Caco-2 (cell line): ENCODE measurements at regions of chr13 and their contacts with region 1.

Region 1: GRCh38 chr13:33542283-33543088 is 256.9 kb upstream of the STARD13 start:
- DNase-seq: peak; percentile 98 to 99
- H3K4me3 ChIP-seq: peak overlapping the region; percentile 55
- H3K4me3 Mint-ChIP-seq: peak overlapping the region; percentile 92
- H3K27ac Mint-ChIP-seq: peak overlapping the region; percentile 98
- H3K4me1 ChIP-seq: peaks cover 17% of the 10 kb centered on the region
- H3K4me1 Mint-ChIP-seq: peaks cover 19% of the 10 kb centered on the region
- H3K27me3 ChIP-seq: no peaks in the 10 kb centered on the region
- H3K27me3 Mint-ChIP-seq: no peaks in the 10 kb centered on the region
- CTCF ChIP-seq: peak; percentile 78 to 89

Region 2: DNA sequence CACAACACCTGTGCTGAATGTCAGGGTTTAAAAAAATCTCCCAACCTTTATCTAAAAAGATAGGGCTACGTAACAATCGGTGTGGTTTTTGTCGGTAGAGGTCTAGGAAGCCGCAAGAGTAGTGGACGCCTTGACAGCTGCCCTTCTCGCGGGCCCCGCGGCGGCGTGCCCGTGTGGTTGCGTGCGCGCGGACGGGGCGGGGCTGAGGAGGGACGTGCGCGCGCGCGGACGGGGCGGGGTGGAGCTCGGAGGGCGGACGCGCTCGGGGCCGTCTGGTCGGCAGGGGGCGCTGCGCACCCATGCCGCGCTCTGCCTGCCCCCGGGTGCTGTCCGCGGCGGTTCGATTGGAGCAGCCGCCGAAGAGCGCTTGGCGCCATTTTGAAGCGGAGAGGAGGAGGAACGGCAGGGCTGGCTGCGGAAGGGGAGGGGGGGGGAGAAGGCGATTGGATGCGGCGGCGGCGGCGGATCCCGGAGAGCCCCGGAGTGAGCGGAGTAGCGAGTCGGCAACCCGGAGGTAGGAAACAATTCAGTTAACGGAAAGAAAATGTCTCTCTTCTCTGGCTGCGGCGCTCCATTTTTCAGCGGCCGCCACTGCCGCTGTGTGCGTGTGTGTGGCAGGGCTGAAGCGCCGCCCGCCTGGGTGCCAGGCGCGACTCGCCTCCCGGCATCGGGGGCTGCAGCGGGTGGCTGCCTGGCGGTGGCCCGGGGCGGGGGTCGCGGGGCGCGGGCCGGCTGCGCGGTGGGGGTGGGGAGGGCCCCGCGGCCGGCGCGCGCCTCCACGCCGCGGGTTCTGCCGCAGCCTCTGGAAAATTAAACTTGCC is 956.2 kb before region 1 on chr13 and contains the start of gene PDS5B:
- CTCF ChIA-PET with region 1: interaction called, 4 read pairs
- POLR2A ChIA-PET with region 1: interaction called, 4 read pairs
- intact Hi-C with region 1: loop called (anchors 2 kb)
- DNase-seq: peak; percentile 96 to 98
- H3K4me3 ChIP-seq: peak within 1 kb of the TSS; percentile 97
- H3K4me3 Mint-ChIP-seq: peak within 1 kb of the TSS; percentile 89
- H3K27ac Mint-ChIP-seq: peak within 1 kb of the TSS; percentile 88
- H3K4me1 ChIP-seq: no peaks in the 10 kb centered on the region
- H3K4me1 Mint-ChIP-seq: peaks cover 13% of the 10 kb centered on the region
- H3K27me3 ChIP-seq: no peaks in the 10 kb centered on the region
- H3K27me3 Mint-ChIP-seq: peaks cover 6% of the 10 kb centered on the region
- CTCF ChIP-seq: peak; percentile 64 to 96
- total RNA-seq, gene PDS5B: 53.0 and 54.9 TPM in 2 replicates

Region 3: GRCh38 chr13:33017323-33017929 is 525.1 kb before region 1 on chr13:
- CTCF ChIA-PET with region 1: no interaction called
- POLR2A ChIA-PET with region 1: interaction called, 3 read pairs
- intact Hi-C with region 1: loop called (anchors 5 kb)
- DNase-seq: peak; percentile 56 to 66
- H3K4me3 ChIP-seq: peak overlapping the region; percentile 59
- H3K4me3 Mint-ChIP-seq: peak overlapping the region; percentile 73
- H3K27ac Mint-ChIP-seq: no peak overlapping the region
- H3K4me1 ChIP-seq: no peaks in the 10 kb centered on the region; the same call in 1 of the 2 replicates
- H3K4me1 Mint-ChIP-seq: no peaks in the 10 kb centered on the region
- H3K27me3 ChIP-seq: peaks cover 2% of the 10 kb centered on the region; the same call in 1 of the 2 replicates
- H3K27me3 Mint-ChIP-seq: peaks cover 8% of the 10 kb centered on the region
- CTCF ChIP-seq: peak in 1 of 2 experiments; percentile 63

Region 4: DNA sequence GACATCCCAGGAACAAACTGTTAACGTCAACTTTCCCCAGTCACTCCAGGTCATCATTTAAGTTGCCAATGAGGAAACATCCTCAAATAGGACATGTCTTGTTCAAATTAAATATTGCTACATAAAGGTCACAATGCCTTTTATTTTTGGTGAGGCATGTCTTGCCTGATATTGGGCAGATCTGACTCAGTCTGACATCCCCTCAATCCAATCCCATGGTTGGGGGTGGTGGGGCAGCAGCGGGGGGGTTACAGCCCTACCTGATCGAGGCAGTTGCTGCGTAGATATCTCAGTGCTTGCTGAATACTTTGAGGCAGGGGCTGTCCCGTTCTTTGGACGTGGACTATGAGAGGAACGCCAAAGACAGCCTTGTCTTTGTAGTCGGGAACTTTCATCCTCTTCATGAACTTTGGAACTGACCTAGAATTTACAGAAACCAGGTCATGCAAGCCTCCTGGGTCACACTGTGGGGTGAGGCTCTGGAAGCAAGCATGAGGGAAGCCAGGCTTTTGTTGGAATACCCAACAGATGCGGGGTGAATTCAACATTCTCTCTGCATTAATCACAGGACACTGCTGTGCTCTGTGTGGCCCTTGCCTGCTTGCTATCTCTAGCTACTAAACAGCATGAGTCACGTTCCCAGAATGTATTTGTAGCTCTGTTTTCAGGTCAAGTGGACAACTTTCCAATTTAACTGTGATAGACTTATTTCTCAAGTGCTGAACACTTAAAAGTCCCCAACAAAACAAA is 416.5 kb before region 1 on chr13:
- CTCF ChIA-PET with region 1: no interaction called
- POLR2A ChIA-PET with region 1: no interaction called
- intact Hi-C with region 1: loop called (anchors 5 kb)
- DNase-seq: peak; percentile 85 to 91
- H3K4me3 ChIP-seq: no peak overlapping the region
- H3K4me3 Mint-ChIP-seq: peak overlapping the region; percentile 54
- H3K27ac Mint-ChIP-seq: peak overlapping the region; percentile 88
- H3K4me1 ChIP-seq: peaks cover 41% of the 10 kb centered on the region
- H3K4me1 Mint-ChIP-seq: peaks cover 37% of the 10 kb centered on the region
- H3K27me3 ChIP-seq: no peaks in the 10 kb centered on the region
- H3K27me3 Mint-ChIP-seq: no peaks in the 10 kb centered on the region
- CTCF ChIP-seq: no peak

Region 5: DNA sequence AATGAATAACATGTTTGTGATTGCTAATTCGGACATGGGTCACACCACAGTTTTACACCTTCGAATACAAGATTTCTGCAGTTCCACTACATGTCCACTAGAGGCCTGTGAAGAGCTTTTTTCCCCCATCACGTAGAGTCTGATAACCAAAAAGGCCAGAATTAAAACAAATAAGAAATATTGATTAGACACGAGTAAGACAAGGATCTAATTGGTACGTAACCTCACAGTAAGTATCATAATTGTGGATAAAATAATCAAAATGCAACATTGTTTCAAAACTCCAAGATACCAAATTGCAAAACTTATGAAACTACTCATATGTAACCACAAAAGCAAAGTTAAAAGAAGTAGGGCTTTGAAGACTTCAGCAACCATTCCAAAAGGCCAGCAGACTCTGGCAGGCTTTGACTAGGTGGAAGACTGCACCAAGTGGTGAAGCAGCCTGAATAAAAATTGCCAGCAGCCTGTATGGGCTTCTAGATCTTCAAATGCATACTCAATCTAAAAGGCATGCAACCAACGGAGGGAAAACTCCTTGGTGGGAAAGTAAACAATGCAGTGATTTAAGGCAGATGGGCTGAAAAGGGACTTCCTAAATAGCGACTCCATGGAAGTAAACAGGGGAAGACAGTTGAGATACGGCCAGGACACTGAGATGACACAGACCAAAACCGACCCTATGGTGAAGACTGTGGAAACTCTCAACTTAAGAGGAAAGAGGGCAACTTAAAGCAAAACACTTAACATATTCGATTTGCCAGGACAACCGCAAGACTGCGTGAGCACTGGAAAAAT is 313.6 kb before region 1 on chr13:
- CTCF ChIA-PET with region 1: interaction called, 7 read pairs
- POLR2A ChIA-PET with region 1: no interaction called
- intact Hi-C with region 1: loop called (anchors 1 kb)
- DNase-seq: peak in 1 of 2 experiments; percentile 42
- H3K4me3 ChIP-seq: no peak overlapping the region
- H3K4me3 Mint-ChIP-seq: no peak overlapping the region
- H3K27ac Mint-ChIP-seq: peak overlapping the region; percentile 17
- H3K4me1 ChIP-seq: peaks cover 16% of the 10 kb centered on the region; the same call in 1 of the 2 replicates
- H3K4me1 Mint-ChIP-seq: peaks cover 19% of the 10 kb centered on the region
- H3K27me3 ChIP-seq: no peaks in the 10 kb centered on the region
- H3K27me3 Mint-ChIP-seq: no peaks in the 10 kb centered on the region
- CTCF ChIP-seq: peak; percentile 93 to 95

Region 6: GRCh38 chr13:33367926-33368325 is 174.6 kb before region 1 on chr13:
- CTCF ChIA-PET with region 1: no interaction called
- POLR2A ChIA-PET with region 1: no interaction called
- intact Hi-C with region 1: loop called (anchors 5 kb)
- DNase-seq: no peak
- H3K4me3 ChIP-seq: no peak overlapping the region
- H3K4me3 Mint-ChIP-seq: no peak overlapping the region
- H3K27ac Mint-ChIP-seq: no peak overlapping the region
- H3K4me1 ChIP-seq: peaks cover 33% of the 10 kb centered on the region
- H3K4me1 Mint-ChIP-seq: peaks cover 26% of the 10 kb centered on the region
- H3K27me3 ChIP-seq: no peaks in the 10 kb centered on the region
- H3K27me3 Mint-ChIP-seq: no peaks in the 10 kb centered on the region
- CTCF ChIP-seq: no peak

Region 7: DNA sequence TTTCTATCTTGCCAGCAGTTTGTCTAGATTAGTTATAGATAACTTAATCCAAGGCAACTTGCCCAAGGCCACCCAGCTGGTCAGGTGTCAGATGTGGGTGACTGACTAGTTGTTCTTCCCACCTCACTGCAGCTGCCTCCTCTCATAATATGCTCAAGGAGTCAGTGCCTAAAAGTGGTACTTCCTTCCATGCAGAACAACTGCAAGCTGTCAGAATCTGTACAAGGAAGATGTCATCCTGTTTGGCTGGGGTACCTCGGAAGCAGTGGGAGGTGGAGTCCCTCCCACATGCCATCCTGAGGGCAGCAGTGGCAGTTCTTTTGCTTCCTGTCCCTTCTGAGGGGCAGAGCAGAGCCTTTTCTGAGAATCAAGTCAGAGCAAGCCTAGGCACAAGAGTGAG is 82.3 kb after region 1 on chr13:
- CTCF ChIA-PET with region 1: no interaction called
- POLR2A ChIA-PET with region 1: no interaction called
- intact Hi-C with region 1: no loop called
- DNase-seq: no peak
- H3K4me3 ChIP-seq: no peak overlapping the region
- H3K4me3 Mint-ChIP-seq: no peak overlapping the region
- H3K27ac Mint-ChIP-seq: no peak overlapping the region
- H3K4me1 ChIP-seq: no peaks in the 10 kb centered on the region
- H3K4me1 Mint-ChIP-seq: no peaks in the 10 kb centered on the region
- H3K27me3 ChIP-seq: no peaks in the 10 kb centered on the region
- H3K27me3 Mint-ChIP-seq: no peaks in the 10 kb centered on the region
- CTCF ChIP-seq: no peak

Region 8: DNA sequence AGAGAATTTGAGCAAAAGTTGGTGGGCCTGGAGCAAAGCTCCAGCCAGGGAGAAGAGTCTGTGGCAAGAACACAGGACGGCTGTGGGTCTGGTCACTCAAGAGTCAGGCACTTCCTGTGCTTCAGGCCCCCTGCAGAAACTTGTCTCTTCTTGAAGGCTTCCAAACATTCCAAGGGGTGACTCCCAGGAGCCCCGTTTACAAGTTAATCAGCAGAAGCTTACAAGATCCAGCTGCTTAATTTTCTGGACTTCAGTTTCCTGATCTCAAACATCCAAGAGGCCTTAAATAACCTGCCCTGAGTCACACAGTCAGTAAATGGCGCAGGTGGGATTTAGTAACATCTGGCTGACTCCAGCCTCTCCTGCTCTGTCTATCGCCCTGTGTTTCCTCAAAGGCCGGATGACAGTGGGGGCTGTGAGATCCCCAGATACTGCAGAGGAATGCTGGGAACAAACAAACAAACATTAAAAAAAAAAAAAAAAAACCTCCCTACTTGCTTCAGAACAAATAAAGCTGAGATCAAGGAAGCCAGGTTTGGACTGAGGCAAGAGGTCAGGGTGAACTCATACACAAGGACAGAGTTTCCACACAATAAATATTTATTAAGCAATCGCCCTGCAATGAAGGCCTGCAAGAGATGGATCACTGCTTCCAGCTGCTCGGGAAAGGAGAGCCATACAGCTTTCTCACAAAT is 100.0 kb after region 1 on chr13:
- CTCF ChIA-PET with region 1: interaction called, 6 read pairs
- POLR2A ChIA-PET with region 1: no interaction called
- intact Hi-C with region 1: loop called (anchors 2 kb)
- DNase-seq: peak; percentile 83 to 86
- H3K4me3 ChIP-seq: no peak overlapping the region
- H3K4me3 Mint-ChIP-seq: peak overlapping the region; percentile 22
- H3K27ac Mint-ChIP-seq: peak overlapping the region; percentile 89
- H3K4me1 ChIP-seq: peaks cover 54% of the 10 kb centered on the region
- H3K4me1 Mint-ChIP-seq: peaks cover 60% of the 10 kb centered on the region
- H3K27me3 ChIP-seq: no peaks in the 10 kb centered on the region
- H3K27me3 Mint-ChIP-seq: no peaks in the 10 kb centered on the region
- CTCF ChIP-seq: no peak